B cell (primary cell): ENCODE measurements at regions of chr9 and their contacts with region 1.

Region 1: DNA sequence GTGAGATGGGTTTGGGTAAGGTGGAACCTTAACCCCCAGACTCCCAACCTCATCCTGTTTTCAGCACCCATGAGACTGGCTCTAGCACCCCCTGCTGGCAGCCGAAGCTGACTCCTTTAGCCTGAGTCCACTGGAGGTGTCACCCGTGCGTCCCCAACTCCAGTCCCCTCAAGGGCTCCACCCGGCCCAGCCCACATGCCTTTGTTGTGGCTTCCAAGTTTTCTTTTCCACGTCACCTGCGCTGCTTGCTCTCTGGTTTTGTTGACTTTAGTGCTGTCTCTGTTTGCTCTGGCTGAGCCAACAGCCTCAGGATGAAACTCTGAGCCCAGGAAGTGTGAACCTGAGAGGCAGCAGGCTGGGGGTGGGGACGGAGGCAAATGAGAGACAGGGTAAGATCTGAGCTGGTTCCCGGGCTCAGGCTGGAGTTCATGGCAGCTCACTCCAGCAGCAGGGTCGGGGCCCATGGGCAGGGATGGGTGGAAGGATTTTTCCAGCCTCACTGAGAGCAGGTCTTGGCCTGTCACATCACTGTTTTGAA is 13.2 kb upstream of the AQP7 start:
- DNase-seq: peak; percentile 51
- ATAC-seq: no peak
- H3K4me3 ChIP-seq: no peak overlapping the region
- H3K4me3 Mint-ChIP-seq: no peak overlapping the region
- H3K27ac ChIP-seq: no peak overlapping the region
- H3K27ac Mint-ChIP-seq: no peak overlapping the region
- H3K4me1 ChIP-seq: no peaks in the 10 kb centered on the region
- H3K4me1 Mint-ChIP-seq: no peaks in the 10 kb centered on the region
- H3K27me3 ChIP-seq: no peaks in the 10 kb centered on the region
- H3K27me3 Mint-ChIP-seq: peaks cover 15% of the 10 kb centered on the region
- CTCF ChIP-seq: peak; percentile 47

Region 2: GRCh38 chr9:33374634-33375213 is 40.8 kb before region 1 on chr9:
- CTCF ChIA-PET with region 1: interaction called, 11 read pairs
- POLR2A ChIA-PET with region 1: no interaction called
- intact Hi-C with region 1: no loop called
- DNase-seq: peak; percentile 66
- ATAC-seq: peak; percentile 88
- H3K4me3 ChIP-seq: no peak overlapping the region
- H3K4me3 Mint-ChIP-seq: no peak overlapping the region
- H3K27ac ChIP-seq: no peak overlapping the region
- H3K27ac Mint-ChIP-seq: no peak overlapping the region
- H3K4me1 ChIP-seq: peaks cover 0 to 7% of the 10 kb centered on the region in 2 donors
- H3K4me1 Mint-ChIP-seq: peaks cover 5% of the 10 kb centered on the region
- H3K27me3 ChIP-seq: no peaks in the 10 kb centered on the region
- H3K27me3 Mint-ChIP-seq: no peaks in the 10 kb centered on the region
- CTCF ChIP-seq: peak; percentile 87

Region 3: GRCh38 chr9:33404788-33405362 is 10.7 kb before region 1 on chr9:
- CTCF ChIA-PET with region 1: no interaction called
- POLR2A ChIA-PET with region 1: no interaction called
- intact Hi-C with region 1: no loop called
- DNase-seq: no peak
- ATAC-seq: no peak
- H3K4me3 ChIP-seq: no peak overlapping the region
- H3K4me3 Mint-ChIP-seq: no peak overlapping the region
- H3K27ac ChIP-seq: no peak overlapping the region
- H3K27ac Mint-ChIP-seq: no peak overlapping the region
- H3K4me1 ChIP-seq: no peaks in the 10 kb centered on the region
- H3K4me1 Mint-ChIP-seq: no peaks in the 10 kb centered on the region
- H3K27me3 ChIP-seq: no peaks in the 10 kb centered on the region
- H3K27me3 Mint-ChIP-seq: peaks cover 6% of the 10 kb centered on the region
- CTCF ChIP-seq: no peak